Calu3 (cell line): ENCODE measurements at regions of chr5 and their contacts with region 1.

Region 1: GRCh38 chr5:35478856-35479682 is 138.6 kb upstream of the SPEF2 start:
- DNase-seq: peak; percentile 21
- H3K4me3 Mint-ChIP-seq: peak overlapping the region; percentile 79
- H3K27ac Mint-ChIP-seq: peak overlapping the region; percentile 96
- H3K4me1 Mint-ChIP-seq: no peaks in the 10 kb centered on the region
- H3K27me3 Mint-ChIP-seq: no peaks in the 10 kb centered on the region
- CTCF ChIP-seq: no peak

Region 2: DNA sequence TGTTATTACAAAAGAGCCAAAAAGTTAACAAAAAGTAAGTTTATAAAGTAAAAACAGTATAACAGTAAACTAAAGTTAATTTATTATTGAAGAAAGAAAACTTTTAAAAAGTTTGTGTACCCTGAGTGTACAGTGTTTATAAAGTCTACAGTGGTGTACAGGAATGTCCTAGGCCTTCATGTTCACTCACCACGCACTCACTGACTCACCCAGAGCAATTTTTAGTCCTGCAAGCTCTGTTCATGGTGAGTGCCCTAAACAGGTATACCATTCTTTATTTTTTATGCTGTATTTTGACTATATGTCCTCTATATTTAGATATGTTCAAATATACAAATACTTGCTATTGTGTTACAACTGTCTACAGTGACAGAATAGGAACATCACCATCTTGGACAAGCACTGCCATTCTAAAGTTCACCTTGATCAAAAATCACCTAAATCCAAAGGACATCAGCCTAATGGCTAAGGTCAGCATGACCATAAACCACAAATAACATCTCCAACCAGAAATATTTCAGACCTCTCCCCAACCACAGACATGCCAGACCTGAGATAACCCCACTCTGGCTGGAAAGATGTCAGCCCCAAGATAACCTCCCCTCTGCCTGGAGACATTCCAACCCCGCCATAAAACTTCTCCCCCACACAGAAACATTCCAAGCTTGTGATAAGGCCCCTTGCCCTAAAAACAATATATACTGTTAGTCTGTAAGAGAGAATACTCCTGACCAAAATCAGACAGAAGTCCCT is 487.4 kb before region 1 on chr5:
- CTCF ChIA-PET with region 1: no interaction called
- intact Hi-C with region 1: no loop called
- DNase-seq: no peak
- H3K4me3 Mint-ChIP-seq: no peak overlapping the region
- H3K27ac Mint-ChIP-seq: no peak overlapping the region
- H3K4me1 Mint-ChIP-seq: no peaks in the 10 kb centered on the region
- H3K27me3 Mint-ChIP-seq: peaks cover 46% of the 10 kb centered on the region
- CTCF ChIP-seq: no peak

Region 3: GRCh38 chr5:35617435-35618303 is 138.6 kb after region 1 on chr5 and contains the start of gene SPEF2:
- CTCF ChIA-PET with region 1: no interaction called
- intact Hi-C with region 1: loop called (anchors 5 kb)
- DNase-seq: peak; percentile 86
- H3K4me3 Mint-ChIP-seq: peak within 1 kb of the TSS; percentile 88
- H3K27ac Mint-ChIP-seq: peak within 1 kb of the TSS; percentile 92
- H3K4me1 Mint-ChIP-seq: peaks cover 9% of the 10 kb centered on the region
- H3K27me3 Mint-ChIP-seq: no peaks in the 10 kb centered on the region
- CTCF ChIP-seq: peak; percentile 66
- total RNA-seq, gene SPEF2: 8.0 and 10.9 TPM in 2 replicates